Thyroid gland (tissue), 4 donors: ENCODE measurements at regions of chr13 and their contacts with region 1.

Region 1: GRCh38 chr13:45807520-45808099 is 43.9 kb downstream of the SIAH3 start:
- DNase-seq: peak; percentile 61 to 62
- H3K4me3 ChIP-seq: no peak overlapping the region
- H3K27ac ChIP-seq: no peak overlapping the region
- H3K4me1 ChIP-seq: no peaks in the 10 kb centered on the region
- H3K27me3 ChIP-seq: no peaks in the 10 kb centered on the region
- CTCF ChIP-seq: peak; percentile 13 to 85 (median 62)
- POLR2A ChIP-seq: no peak

Region 2: GRCh38 chr13:45863709-45864590 is 56.3 kb after region 1 on chr13:
- intact Hi-C with region 1: no loop called
- DNase-seq: no peak
- H3K4me3 ChIP-seq: no peak overlapping the region
- H3K27ac ChIP-seq: no peak overlapping the region
- H3K4me1 ChIP-seq: no peaks in the 10 kb centered on the region
- H3K27me3 ChIP-seq: no peaks in the 10 kb centered on the region
- CTCF ChIP-seq: no peak
- POLR2A ChIP-seq: no peak

Region 3: GRCh38 chr13:45925151-45925550 is 117.5 kb after region 1 on chr13:
- intact Hi-C with region 1: no loop called
- DNase-seq: no peak
- H3K4me3 ChIP-seq: no peak overlapping the region
- H3K27ac ChIP-seq: no peak overlapping the region
- H3K4me1 ChIP-seq: no peaks in the 10 kb centered on the region
- H3K27me3 ChIP-seq: no peaks in the 10 kb centered on the region
- CTCF ChIP-seq: no peak
- POLR2A ChIP-seq: no peak

Region 4: GRCh38 chr13:46126552-46127357 is 319.1 kb after region 1 on chr13:
- intact Hi-C with region 1: loop called (anchors 10 kb)
- DNase-seq: peak; percentile 84 to 86
- H3K4me3 ChIP-seq: no peak overlapping the region
- H3K27ac ChIP-seq: no peak overlapping the region
- H3K4me1 ChIP-seq: peaks cover 3% of the 10 kb centered on the region in 2 donors
- H3K27me3 ChIP-seq: no peaks in the 10 kb centered on the region
- CTCF ChIP-seq: peak; percentile 65 to 96 (median 88)
- POLR2A ChIP-seq: no peak